Head of caudate nucleus (tissue), 42 donors: ENCODE measurements at regions of chr20 and their contacts with region 1.

Region 1: DNA sequence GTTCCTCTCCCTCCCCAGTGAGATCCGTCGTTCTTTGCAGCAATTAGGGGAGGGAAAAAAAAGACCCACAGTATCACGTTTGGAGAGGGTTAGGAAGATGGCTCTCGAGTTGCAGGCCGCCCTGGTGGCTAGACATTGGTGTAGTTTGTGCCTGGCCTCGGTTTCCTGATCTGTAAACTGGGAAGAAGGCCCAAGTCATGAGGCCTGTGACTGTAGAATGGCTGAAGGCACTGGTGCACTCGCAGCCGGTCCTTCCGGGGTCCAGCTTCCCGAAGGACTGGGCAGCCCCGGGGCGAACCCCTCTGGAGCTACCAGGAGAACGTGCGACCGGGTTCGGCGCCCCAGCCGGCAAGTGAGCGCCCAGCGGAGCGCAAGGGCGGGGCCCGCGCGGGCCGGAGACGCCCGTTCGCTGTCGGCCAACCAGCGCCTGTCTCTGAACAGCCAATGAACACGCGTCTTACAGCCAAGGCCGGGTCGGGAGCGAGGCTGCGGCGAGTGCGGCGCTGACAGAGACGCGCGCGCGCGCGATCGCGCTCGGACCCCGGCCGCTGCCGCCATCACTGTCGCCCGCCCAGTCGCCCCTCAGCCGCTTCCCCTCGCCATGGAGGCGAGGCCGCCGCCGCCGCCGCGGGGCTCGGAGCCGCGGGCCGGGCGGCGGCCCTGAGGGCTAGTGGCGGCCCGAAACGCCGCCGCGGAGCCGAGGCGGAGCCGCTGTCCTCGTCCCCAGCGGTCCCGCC is at the start of gene PTPRA:
- DNase-seq: peak; percentile 92 to 98 (median 96)

Region 2: GRCh38 chr20:2671977-2672376 is 201.2 kb before region 1 on chr20:
- intact Hi-C with region 1: no loop called
- DNase-seq: no peak

Region 3: GRCh38 chr20:2688041-2688591 is 185.1 kb before region 1 on chr20:
- intact Hi-C with region 1: no loop called
- DNase-seq: peak in 41 of 42 donors; percentile 35 to 87 (median 68)

Region 4: GRCh38 chr20:2840138-2840966 is 32.8 kb before region 1 on chr20 and contains the starts of genes PCED1A and VPS16:
- intact Hi-C with region 1: loop called (anchors 2 kb)
- DNase-seq: peak; percentile 76 to 96 (median 92)

Region 5: GRCh38 chr20:2946988-2947961 is 74.1 kb after region 1 on chr20:
- intact Hi-C with region 1: loop called (anchors 10 kb)
- DNase-seq: peak in 35 of 42 donors; percentile 18 to 88 (median 68)

Region 6: GRCh38 chr20:3045816-3046676 is 172.9 kb after region 1 on chr20 and contains the start of gene MRPS26:
- intact Hi-C with region 1: loop called (anchors 5 kb)
- DNase-seq: peak; percentile 72 to 96 (median 92)